Caco-2 (cell line): ENCODE measurements at regions of chr13 and their contacts with region 1.

Region 1: GRCh38 chr13:36999054-36999714 is at the start of gene ALG5:
- DNase-seq: peak; percentile 89 to 95
- H3K4me3 ChIP-seq: peak within 1 kb of the TSS; percentile 76
- H3K4me3 Mint-ChIP-seq: peak within 1 kb of the TSS; percentile 90
- H3K27ac Mint-ChIP-seq: peak within 1 kb of the TSS; percentile 98
- H3K4me1 ChIP-seq: peaks cover 7% of the 10 kb centered on the region; the same call in 1 of the 2 replicates
- H3K4me1 Mint-ChIP-seq: peaks cover 11% of the 10 kb centered on the region
- H3K27me3 ChIP-seq: no peaks in the 10 kb centered on the region
- H3K27me3 Mint-ChIP-seq: no peaks in the 10 kb centered on the region
- CTCF ChIP-seq: peak; percentile 85 to 92
- total RNA-seq, gene ALG5: 62.0 and 66.8 TPM in 2 replicates

Region 2: DNA sequence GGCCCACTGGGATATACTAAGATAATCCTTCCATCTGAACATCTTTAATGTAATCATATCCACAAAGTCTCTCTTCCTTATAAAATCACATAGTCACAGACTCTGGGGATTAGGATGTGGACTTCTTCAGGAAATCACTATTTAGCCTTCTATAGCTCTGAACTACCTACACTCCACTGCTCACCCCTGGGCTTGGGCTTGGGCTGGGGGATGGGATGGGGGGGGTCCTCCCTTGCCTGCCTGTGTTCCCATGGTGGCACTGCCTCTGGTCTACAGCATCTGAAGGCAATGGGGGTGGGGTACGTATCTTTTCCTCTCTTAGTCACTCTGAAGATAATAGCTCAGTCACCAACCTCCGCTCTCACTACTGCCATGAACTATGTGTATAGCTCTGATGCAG is 393.1 kb before region 1 on chr13:
- CTCF ChIA-PET with region 1: no interaction called
- POLR2A ChIA-PET with region 1: no interaction called
- intact Hi-C with region 1: no loop called
- DNase-seq: no peak
- H3K4me3 ChIP-seq: no peak overlapping the region
- H3K4me3 Mint-ChIP-seq: no peak overlapping the region
- H3K27ac Mint-ChIP-seq: no peak overlapping the region
- H3K4me1 ChIP-seq: no peaks in the 10 kb centered on the region
- H3K4me1 Mint-ChIP-seq: no peaks in the 10 kb centered on the region
- H3K27me3 ChIP-seq: no peaks in the 10 kb centered on the region
- H3K27me3 Mint-ChIP-seq: no peaks in the 10 kb centered on the region
- CTCF ChIP-seq: no peak

Region 3: GRCh38 chr13:36818804-36819738 is 180.1 kb before region 1 on chr13 and contains the start of gene RFXAP:
- CTCF ChIA-PET with region 1: interaction called, 4 read pairs
- POLR2A ChIA-PET with region 1: interaction called, 7 read pairs
- intact Hi-C with region 1: loop called (anchors 1 kb)
- DNase-seq: peak; percentile 87 to 93
- H3K4me3 ChIP-seq: peak within 1 kb of the TSS; percentile 82
- H3K4me3 Mint-ChIP-seq: peak within 1 kb of the TSS; percentile 96
- H3K27ac Mint-ChIP-seq: peak within 1 kb of the TSS; percentile 82
- H3K4me1 ChIP-seq: peaks cover 10% of the 10 kb centered on the region
- H3K4me1 Mint-ChIP-seq: peaks cover 13% of the 10 kb centered on the region
- H3K27me3 ChIP-seq: no peaks in the 10 kb centered on the region
- H3K27me3 Mint-ChIP-seq: no peaks in the 10 kb centered on the region
- CTCF ChIP-seq: no peak
- total RNA-seq, gene RFXAP: 8.7 and 11.5 TPM in 2 replicates

Region 4: GRCh38 chr13:36903925-36904595 is 95.1 kb before region 1 on chr13:
- CTCF ChIA-PET with region 1: no interaction called
- POLR2A ChIA-PET with region 1: no interaction called
- intact Hi-C with region 1: no loop called
- DNase-seq: no peak
- H3K4me3 ChIP-seq: no peak overlapping the region
- H3K4me3 Mint-ChIP-seq: no peak overlapping the region
- H3K27ac Mint-ChIP-seq: no peak overlapping the region
- H3K4me1 ChIP-seq: no peaks in the 10 kb centered on the region
- H3K4me1 Mint-ChIP-seq: no peaks in the 10 kb centered on the region
- H3K27me3 ChIP-seq: no peaks in the 10 kb centered on the region
- H3K27me3 Mint-ChIP-seq: peaks cover 2% of the 10 kb centered on the region
- CTCF ChIP-seq: no peak

Region 5: DNA sequence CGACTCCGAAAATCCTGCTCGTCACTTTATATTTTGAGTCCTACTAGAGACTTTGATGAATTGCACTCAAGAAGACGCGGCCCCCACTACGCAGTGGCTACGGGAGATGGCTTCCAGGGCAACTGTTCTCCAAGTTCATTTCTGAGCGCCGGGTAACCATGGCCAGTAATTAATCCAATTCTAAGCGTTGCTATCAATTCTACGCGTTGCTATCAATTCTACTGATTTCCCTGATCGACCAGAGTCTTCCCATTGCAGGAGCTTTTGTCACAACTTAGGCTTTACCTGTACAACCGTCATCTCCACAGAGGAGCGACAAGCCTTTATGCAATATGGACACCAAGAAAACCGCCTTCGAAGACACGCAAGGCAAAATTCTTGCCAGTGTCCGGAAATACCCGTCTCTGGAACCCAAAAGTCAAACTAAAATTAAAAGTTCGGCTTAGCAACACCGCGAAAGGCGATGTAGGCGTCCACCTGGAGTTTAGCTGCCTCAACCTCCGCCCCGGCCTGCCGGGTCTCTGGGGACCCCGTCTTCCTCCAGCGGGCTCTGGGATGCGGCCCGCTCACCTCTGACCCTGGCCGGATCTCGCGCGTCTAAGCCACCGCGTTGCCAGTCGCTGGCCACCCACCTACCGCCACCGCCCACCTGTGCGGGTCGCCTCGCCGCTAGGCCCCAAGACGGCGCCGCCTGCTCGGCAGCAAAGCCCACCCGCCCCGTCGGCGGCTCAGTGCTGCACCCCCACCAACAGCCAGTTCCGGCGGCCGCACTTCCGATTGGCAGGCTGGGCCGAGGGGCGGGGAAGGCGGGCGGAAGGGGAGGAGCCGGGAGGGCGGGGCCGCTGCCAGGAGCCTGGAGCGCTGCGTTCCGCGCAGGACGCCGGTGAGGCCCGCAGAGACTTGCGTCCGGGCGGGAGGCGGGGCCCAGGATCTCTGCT is 60.0 kb after region 1 on chr13 and contains the start of gene SUPT20H:
- CTCF ChIA-PET with region 1: no interaction called
- POLR2A ChIA-PET with region 1: no interaction called
- intact Hi-C with region 1: loop called (anchors 2 kb)
- DNase-seq: peak; percentile 92 to 94
- H3K4me3 ChIP-seq: peak within 1 kb of the TSS; percentile 72
- H3K4me3 Mint-ChIP-seq: peak within 1 kb of the TSS; percentile 98
- H3K27ac Mint-ChIP-seq: peak within 1 kb of the TSS; percentile 98
- H3K4me1 ChIP-seq: peaks cover 7% of the 10 kb centered on the region; the same call in 1 of the 2 replicates
- H3K4me1 Mint-ChIP-seq: no peaks in the 10 kb centered on the region
- H3K27me3 ChIP-seq: no peaks in the 10 kb centered on the region
- H3K27me3 Mint-ChIP-seq: peaks cover 7% of the 10 kb centered on the region
- CTCF ChIP-seq: no peak
- total RNA-seq, gene SUPT20H: 77.5 and 77.7 TPM in 2 replicates